ENCODE measurements at regions of chr18 and their contacts with region 1.

Region 1: DNA sequence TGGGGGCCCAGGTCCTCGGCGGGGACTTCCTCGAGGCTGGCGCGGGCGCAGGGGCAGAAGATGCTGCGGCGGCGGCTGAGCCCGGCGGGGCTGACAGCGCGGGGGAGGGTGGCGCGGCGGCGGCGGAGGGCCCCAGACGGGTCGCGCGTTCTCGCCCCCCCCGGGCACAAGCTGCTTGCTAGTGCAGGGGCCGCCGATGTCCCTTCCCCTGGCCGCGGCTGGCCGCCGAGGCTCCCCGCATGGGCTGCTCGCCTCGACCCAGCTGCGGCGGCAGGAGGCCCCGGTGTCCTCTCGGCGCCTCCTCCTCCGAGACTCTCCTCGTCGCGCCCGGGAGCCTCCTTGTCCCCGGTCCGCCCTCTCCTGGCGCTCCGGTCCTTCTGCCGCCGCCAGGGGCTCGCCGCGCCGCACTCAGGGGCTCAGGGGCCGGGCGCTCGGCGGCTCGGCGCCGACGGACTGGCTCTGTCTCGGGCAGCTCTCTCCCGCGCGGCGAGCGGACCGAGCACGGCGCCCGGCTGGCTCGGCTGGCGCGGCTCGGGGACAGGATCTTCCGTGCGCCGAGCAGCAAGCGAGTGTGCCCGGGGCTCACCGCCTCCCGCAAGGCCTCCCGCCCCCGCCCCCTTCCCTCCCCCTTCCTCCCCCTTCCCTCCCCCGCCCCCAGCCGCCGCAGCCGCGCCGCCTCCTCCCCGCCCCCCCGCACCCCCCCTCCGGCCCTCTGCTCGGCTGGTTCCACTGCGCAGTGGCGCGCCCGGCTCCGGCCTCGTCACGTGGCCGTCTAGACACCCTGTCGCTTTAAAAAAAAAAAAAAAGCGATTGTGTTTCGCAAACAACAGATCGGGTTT is 902 bp upstream of the SMAD7 start:
- DNase-seq: peak; percentile 84
- ATAC-seq: peak; percentile 56
- H3K4me3 Mint-ChIP-seq: peak overlapping the region; percentile 95
- H3K27ac Mint-ChIP-seq: peak overlapping the region; percentile 84
- H3K4me1 Mint-ChIP-seq: peaks cover 32% of the 10 kb centered on the region
- H3K27me3 Mint-ChIP-seq: no peaks in the 10 kb centered on the region

Region 2: GRCh38 chr18:48445540-48445939 is 506.1 kb before region 1 on chr18:
- CTCF ChIA-PET with region 1: no interaction called
- DNase-seq: peak; percentile 83
- ATAC-seq: peak; percentile 79
- H3K4me3 Mint-ChIP-seq: no peak overlapping the region
- H3K27ac Mint-ChIP-seq: no peak overlapping the region
- H3K4me1 Mint-ChIP-seq: no peaks in the 10 kb centered on the region
- H3K27me3 Mint-ChIP-seq: peaks cover 37% of the 10 kb centered on the region

Region 3: DNA sequence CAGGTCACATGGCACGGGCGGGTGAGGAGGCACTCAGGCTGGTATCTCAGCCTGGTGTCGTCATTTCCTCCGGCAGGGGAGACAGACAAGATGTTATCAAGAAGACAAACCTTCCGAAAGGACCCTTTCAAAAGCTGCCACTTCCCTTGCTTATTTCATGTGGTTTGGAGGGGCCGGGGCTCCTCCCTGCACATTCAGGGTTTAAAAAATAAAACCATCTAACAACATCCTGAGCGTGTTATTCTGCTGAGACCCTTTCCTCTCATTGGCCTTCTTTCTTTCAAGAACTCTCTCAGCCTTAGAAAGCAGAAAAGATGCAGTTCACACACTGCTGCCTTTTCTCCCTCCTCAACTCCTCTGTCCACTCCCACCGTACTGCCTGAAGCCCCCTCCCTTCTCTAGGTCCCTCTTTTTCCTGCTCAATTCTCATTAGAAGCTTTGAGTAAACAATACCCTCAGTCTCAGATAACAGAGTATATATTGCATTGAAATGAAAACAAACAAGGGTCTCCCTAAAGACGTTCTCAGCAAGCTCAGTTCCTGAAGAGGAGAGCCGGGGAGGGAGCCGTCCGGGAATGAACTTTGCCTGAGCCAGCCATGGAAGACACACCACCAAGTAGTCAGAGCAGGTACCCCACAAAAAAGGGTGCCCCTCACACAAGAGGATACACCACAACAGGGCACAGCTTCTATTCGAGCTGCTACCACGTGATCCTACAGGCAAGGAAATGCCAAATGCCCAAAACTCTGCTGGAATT is 10.6 kb before region 1 on chr18:
- CTCF ChIA-PET with region 1: interaction called, 10 read pairs
- DNase-seq: peak; percentile 92
- ATAC-seq: peak; percentile 91
- H3K4me3 Mint-ChIP-seq: peak overlapping the region; percentile 71
- H3K27ac Mint-ChIP-seq: peak overlapping the region; percentile 94
- H3K4me1 Mint-ChIP-seq: peaks cover 91% of the 10 kb centered on the region
- H3K27me3 Mint-ChIP-seq: no peaks in the 10 kb centered on the region